Tibial artery (tissue), 4 donors: ENCODE measurements at regions of chr12 and their contacts with region 1.

Region 1: GRCh38 chr12:68317047-68317667 is 15.0 kb downstream of the MDM1 start:
- DNase-seq: peak in 1 of 2 donors; percentile 22
- H3K4me3 ChIP-seq: no peak overlapping the region
- H3K27ac ChIP-seq: no peak overlapping the region
- H3K4me1 ChIP-seq: no peaks in the 10 kb centered on the region
- H3K27me3 ChIP-seq: no peaks in the 10 kb centered on the region
- CTCF ChIP-seq: peak; percentile 59

Region 2: DNA sequence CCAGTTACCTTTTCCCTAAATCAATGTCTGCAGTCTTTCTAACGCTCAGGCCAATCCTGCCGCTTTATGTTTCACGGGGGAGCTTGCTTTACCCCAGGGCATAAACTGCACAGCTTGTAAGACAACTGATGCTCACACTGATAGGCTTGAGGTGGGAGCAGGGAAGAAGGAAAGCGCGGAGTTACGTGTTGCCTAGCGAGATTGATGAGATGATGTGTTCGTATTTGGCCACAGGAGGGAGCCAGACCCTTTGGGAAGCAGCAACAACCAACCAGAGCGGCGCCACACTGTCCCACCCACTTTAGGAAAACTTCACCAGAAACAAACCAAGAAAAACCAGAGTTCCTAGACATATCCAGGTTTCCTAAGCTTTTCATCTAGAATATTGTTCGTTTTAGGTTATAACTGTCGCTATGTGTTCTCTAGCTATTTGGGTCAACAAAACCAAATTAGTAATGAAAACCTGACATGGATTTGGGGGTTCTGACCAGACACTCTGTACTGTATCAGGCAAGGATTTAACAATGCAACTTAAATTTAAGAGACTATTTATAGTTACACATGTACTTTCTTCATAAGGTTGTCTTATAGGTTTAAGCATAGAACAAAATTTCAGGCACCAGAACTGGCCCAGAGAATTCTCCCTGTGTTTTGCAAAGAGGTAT is 93.9 kb before region 1 on chr12:
- intact Hi-C with region 1: loop called (anchors 5 kb)
- DNase-seq: peak; percentile 83 to 84
- H3K4me3 ChIP-seq: no peak overlapping the region
- H3K27ac ChIP-seq: no peak overlapping the region
- H3K4me1 ChIP-seq: peaks cover 0 to 9% (median 0%) of the 10 kb centered on the region in 4 donors
- H3K27me3 ChIP-seq: no peaks in the 10 kb centered on the region
- CTCF ChIP-seq: peak; percentile 79 to 81

Region 3: DNA sequence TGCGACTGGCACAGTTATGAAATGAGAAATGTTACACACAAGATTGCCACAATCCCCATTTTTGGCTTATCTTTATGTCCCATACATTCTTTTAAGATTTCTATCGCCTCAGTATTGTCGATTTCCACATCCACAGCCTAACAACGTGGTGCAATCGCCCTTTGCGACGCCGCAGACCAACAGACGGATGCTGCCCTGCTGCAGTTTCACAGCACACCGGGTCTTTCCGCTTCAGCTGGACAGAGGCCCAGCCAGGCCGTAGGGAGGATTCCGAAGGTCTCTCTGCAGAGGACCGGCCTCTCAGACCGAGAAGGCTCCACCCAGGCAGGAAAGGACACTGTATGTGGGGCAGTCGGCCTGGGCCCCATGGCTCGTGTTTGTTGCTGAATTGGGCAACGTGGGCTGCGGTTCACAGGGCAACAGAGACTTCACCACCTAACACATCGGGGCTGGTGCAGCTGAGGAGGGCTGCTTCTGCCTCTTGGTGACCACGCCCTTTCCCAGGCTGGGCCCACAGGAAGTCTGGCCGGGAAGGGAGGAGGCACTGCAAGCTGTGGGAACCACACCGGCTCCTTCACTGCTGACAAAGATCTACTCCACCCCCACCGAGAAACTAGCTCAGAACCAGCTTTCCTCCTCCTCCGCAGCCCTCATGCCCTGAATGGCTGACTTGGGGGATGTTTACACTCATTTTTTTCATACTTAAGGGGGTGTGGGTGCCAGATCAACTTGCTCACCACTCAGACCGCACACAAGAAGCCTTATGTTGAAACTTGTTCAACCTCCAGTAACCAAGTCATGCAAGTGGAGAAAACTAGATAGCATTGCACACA is 48.0 kb after region 1 on chr12:
- intact Hi-C with region 1: no loop called
- DNase-seq: peak; percentile 95 to 98
- H3K4me3 ChIP-seq: peak overlapping the region; percentile 45 to 50
- H3K27ac ChIP-seq: peak overlapping the region; percentile 76 to 79
- H3K4me1 ChIP-seq: peaks cover 3 to 22% (median 13%) of the 10 kb centered on the region in 4 donors
- H3K27me3 ChIP-seq: no peaks in the 10 kb centered on the region
- CTCF ChIP-seq: no peak

Region 4: GRCh38 chr12:68807576-68808387 is 490.6 kb after region 1 on chr12 and contains the start of gene MDM2:
- intact Hi-C with region 1: loop called (anchors 10 kb)
- DNase-seq: peak; percentile 90 to 96
- H3K4me3 ChIP-seq: peak within 1 kb of the TSS; percentile 74 to 98
- H3K27ac ChIP-seq: peak within 1 kb of the TSS; percentile 95 to 100
- H3K4me1 ChIP-seq: peaks cover 0 to 40% (median 18%) of the 10 kb centered on the region in 4 donors
- H3K27me3 ChIP-seq: no peaks in the 10 kb centered on the region
- CTCF ChIP-seq: peak; percentile 80 to 93